Posterior vena cava (tissue), 2 donors: ENCODE measurements at regions of chr5 and their contacts with region 1.

Region 1: GRCh38 chr5:15254607-15255006 is 245.4 kb upstream of the FBXL7 start:
- DNase-seq: no peak

Region 2: DNA sequence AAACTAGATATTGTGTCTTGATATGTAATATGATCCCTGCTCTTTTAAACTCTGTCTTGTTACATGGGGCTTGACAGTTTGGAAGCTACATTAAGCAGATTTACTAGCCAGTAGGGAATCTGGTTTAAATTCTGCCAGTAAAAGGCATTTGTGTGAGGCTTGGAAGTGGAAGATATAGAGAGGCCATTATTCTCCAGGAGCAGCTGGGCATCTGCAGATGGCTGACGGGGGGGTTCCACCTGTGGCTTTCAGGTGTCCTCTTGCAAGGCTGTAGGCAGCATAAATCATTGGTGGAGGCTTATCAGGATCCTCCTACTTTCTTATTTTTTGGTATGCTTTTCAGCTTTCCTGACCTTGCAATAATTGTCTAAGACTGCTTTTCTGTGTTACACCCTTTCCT is 66.3 kb after region 1 on chr5:
- intact Hi-C with region 1: no loop called
- DNase-seq: no peak

Region 3: GRCh38 chr5:15354021-15354420 is 99.4 kb after region 1 on chr5:
- intact Hi-C with region 1: no loop called
- DNase-seq: no peak

Region 4: DNA sequence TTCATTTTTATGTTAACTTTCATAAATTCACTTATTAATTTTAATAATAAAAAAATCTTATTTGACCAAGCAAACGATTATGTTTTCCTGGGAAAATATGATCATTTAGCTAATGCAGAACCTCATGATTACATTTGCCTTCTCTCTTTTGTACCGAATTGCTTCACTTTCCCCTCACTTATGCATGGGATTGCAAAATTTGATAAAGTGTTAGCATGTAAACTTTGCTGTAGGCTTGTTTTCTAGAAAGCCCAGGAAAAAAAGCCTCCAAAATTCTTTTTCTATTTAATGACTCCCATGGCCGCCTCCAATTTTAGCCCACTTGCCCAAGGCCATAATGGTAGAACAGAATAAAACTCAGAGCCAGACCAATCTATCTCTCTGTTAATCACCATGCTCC is 162.5 kb after region 1 on chr5:
- intact Hi-C with region 1: no loop called
- DNase-seq: no peak

Region 5: DNA sequence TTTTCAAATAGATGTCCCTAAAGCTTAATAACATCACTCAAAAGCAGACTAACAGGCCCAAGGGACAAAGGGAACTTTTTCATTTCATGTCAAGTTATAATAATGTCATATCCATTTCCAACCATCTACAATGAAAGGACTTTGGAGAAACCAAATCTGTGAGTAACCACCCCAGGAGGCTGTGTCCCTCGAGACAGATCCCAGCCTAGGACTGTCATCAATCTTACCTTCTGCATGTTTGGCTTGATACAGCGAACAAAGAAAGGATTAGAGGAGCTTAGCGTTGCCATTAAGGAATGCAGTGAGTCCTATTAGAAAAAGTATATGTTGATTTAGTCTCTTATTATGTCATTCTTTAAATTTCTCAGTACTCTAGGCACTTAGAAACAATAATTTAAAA is 1500.0 kb after region 1 on chr5:
- intact Hi-C with region 1: loop called in 1 of 2 experiments (anchors 5 kb)
- DNase-seq: no peak